PC-9 (cell line): ENCODE measurements at regions of chr16 and their contacts with region 1.

Region 1: DNA sequence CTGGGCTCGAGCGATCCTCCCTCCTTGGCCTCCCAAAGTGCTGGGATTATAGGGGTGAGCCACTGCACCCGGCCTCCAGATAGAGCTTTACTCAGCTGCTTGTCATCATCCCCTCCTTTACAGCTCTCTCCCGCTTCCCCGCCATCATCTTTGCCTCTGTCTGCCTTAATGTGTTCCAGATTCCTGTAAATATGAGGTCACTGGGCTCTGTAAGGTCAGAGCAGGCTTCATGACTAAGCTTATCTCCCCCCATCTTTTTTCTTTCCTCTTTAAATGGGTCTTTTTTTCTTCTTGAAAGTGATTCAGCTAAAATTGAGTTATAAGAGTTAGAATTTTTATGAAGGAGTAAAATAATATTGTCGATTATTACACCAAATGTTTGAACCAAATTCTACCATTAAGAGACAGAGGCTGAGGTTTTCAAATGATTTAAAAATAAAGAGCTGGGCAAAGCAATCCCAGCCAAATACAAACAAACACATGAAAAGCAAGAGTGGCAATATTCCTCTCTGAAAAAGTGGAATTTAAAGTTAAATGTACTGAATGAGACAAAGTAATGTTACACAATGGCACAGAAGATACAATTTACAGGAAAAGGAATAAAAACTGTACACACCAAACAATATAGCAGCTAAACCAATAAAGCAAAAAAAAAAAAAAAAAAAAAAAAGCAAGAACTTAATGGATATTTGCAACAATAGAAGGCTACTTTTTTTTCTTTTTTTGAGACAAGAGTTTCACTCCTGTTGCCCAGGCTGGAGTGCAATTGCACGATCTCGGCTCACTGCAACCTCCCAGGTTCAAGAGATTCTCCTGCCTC is 62.1 kb downstream of the CRISPLD2 start:
- DNase-seq: peak; percentile 55 to 77
- H3K4me3 ChIP-seq: no peak overlapping the region
- H3K27ac ChIP-seq: peak overlapping the region; percentile 78
- H3K4me1 ChIP-seq: peaks cover 68% of the 10 kb centered on the region
- H3K27me3 ChIP-seq: no peaks in the 10 kb centered on the region
- CTCF ChIP-seq: no peak

Region 2: GRCh38 chr16:84841770-84842300 is 40.1 kb before region 1 on chr16:
- CTCF ChIA-PET with region 1: no interaction called
- POLR2A ChIA-PET with region 1: no interaction called
- intact Hi-C with region 1: loop called (anchors 2 kb)
- DNase-seq: peak; percentile 87 to 92
- H3K4me3 ChIP-seq: no peak overlapping the region; the same call in 1 of the 2 replicates
- H3K27ac ChIP-seq: peak overlapping the region; percentile 80
- H3K4me1 ChIP-seq: peaks cover 48% of the 10 kb centered on the region
- H3K27me3 ChIP-seq: no peaks in the 10 kb centered on the region
- CTCF ChIP-seq: no peak

Region 3: GRCh38 chr16:85162478-85163277 is 280.8 kb after region 1 on chr16:
- CTCF ChIA-PET with region 1: no interaction called
- POLR2A ChIA-PET with region 1: no interaction called
- intact Hi-C with region 1: no loop called
- DNase-seq: no peak
- H3K4me3 ChIP-seq: no peak overlapping the region
- H3K27ac ChIP-seq: no peak overlapping the region
- H3K4me1 ChIP-seq: no peaks in the 10 kb centered on the region
- H3K27me3 ChIP-seq: peaks cover 7% of the 10 kb centered on the region
- CTCF ChIP-seq: no peak